Heart right ventricle (tissue), 16 donors: ENCODE measurements at regions of chr11 and their contacts with region 1.

Region 1: DNA sequence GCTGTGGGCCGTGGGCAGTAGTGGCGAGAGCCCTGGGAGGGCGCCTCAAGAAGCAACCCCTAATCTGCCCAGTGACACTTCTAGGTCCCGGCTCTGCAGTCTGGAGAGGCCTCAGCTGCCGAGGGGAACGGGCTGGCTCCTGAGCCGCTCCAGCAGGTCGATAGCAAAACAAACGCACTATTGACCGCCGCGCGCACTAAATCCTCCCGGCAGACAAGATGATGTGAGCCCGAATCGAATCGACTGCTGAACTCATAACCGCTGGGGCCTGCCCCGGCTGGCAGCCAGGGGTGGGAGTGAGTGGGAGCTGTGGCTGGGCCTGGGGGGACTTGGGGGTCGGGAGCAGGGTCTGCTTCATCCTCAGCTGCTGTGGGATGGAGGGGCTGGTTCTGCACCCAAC is 36.1 kb downstream of the FLRT1 start:
- DNase-seq: no peak
- ATAC-seq: no peak
- H3K4me3 ChIP-seq: no peak overlapping the region
- H3K27ac ChIP-seq: no peak overlapping the region
- H3K4me1 ChIP-seq: peaks cover 6 to 47% (median 20%) of the 10 kb centered on the region in 9 donors
- H3K27me3 ChIP-seq: no peaks in the 10 kb centered on the region
- CTCF ChIP-seq: no peak

Region 2: DNA sequence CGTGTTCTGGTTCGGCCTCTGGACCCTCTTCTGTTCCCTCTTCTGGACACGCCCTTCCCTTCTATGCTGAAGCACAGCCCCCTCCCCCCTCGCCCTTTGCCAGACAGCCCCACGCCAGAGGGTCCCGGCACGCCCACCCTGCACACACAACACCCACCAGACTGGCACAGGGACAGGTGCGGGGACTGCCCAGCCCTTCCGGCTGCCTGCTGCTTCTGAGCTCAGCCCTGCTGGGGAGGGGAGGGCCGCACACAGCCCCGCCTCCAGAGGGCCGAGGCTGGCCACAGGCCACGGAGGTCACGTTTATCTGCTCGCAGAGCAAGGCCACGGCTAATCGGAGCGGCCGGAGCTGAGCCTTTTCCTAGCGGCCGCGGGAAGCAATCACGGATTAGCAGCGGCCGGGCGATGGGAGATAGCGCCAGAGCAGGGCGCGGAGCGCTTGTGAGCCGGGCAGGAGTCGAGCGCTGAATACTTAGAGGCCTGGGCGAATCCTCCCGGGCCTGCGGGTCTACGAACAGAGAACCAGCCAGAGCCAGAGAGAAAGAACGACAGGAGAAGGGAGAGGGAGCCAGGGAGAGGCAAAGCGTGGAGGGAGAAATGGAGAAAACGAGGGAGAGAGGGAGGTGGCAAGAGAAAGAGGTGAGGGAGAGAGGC is 64.1 kb before region 1 on chr11:
- intact Hi-C with region 1: loop called in 1 of 10 experiments (anchors 2 kb)
- DNase-seq: peak; percentile 72 to 84
- ATAC-seq: peak; percentile 73 to 91 (median 88)
- H3K4me3 ChIP-seq: peak overlapping the region in 9 of 10 donors; percentile 28 to 54 (median 45)
- H3K27ac ChIP-seq: peak overlapping the region in 9 of 10 donors; percentile 2 to 57 (median 33)
- H3K4me1 ChIP-seq: peaks cover 0 to 31% (median 17%) of the 10 kb centered on the region in 9 donors
- H3K27me3 ChIP-seq: peaks cover 0 to 53% (median 0%) of the 10 kb centered on the region in 7 donors
- CTCF ChIP-seq: peak in 7 of 9 donors; percentile 11 to 50 (median 40)

Region 3: DNA sequence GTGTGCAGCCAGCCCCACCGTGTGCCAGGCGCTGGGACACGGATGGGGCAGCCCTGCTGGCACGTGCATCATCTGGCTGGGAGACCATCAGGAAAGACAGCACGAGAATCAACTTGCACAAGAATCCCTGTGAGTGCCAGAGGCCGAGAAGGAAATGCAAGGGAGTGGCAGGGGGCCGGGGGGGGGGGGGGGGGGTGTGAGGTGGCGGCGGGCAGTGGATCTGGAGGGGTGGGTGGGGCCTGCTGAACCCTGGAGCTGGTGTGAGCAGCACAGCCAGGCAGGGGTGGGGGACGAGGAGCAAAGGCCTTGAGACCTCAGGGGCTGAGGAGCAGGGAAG is 50.1 kb before region 1 on chr11:
- intact Hi-C with region 1: no loop called
- DNase-seq: no peak
- ATAC-seq: peak in 4 of 8 donors; percentile 32 to 58 (median 46)
- H3K4me3 ChIP-seq: no peak overlapping the region
- H3K27ac ChIP-seq: peak overlapping the region in 1 of 10 donors; percentile 39
- H3K4me1 ChIP-seq: peaks cover 0 to 49% (median 26%) of the 10 kb centered on the region in 9 donors
- H3K27me3 ChIP-seq: no peaks in the 10 kb centered on the region
- CTCF ChIP-seq: peak in 2 of 9 donors; percentile 15 to 23

Region 4: GRCh38 chr11:64110465-64111375 is 38.9 kb after region 1 on chr11:
- intact Hi-C with region 1: no loop called
- DNase-seq: no peak
- ATAC-seq: peak in 2 of 8 donors; percentile 6 to 12
- H3K4me3 ChIP-seq: no peak overlapping the region
- H3K27ac ChIP-seq: no peak overlapping the region
- H3K4me1 ChIP-seq: peaks cover 0 to 6% (median 0%) of the 10 kb centered on the region in 9 donors
- H3K27me3 ChIP-seq: no peaks in the 10 kb centered on the region
- CTCF ChIP-seq: no peak

Region 5: GRCh38 chr11:64122411-64123410 is 50.9 kb after region 1 on chr11:
- intact Hi-C with region 1: no loop called
- DNase-seq: peak; percentile 59 to 70
- ATAC-seq: peak in 7 of 8 donors; percentile 68 to 87 (median 76)
- H3K4me3 ChIP-seq: no peak overlapping the region
- H3K27ac ChIP-seq: no peak overlapping the region
- H3K4me1 ChIP-seq: peaks cover 0 to 28% (median 12%) of the 10 kb centered on the region in 9 donors
- H3K27me3 ChIP-seq: no peaks in the 10 kb centered on the region
- CTCF ChIP-seq: no peak

Region 6: DNA sequence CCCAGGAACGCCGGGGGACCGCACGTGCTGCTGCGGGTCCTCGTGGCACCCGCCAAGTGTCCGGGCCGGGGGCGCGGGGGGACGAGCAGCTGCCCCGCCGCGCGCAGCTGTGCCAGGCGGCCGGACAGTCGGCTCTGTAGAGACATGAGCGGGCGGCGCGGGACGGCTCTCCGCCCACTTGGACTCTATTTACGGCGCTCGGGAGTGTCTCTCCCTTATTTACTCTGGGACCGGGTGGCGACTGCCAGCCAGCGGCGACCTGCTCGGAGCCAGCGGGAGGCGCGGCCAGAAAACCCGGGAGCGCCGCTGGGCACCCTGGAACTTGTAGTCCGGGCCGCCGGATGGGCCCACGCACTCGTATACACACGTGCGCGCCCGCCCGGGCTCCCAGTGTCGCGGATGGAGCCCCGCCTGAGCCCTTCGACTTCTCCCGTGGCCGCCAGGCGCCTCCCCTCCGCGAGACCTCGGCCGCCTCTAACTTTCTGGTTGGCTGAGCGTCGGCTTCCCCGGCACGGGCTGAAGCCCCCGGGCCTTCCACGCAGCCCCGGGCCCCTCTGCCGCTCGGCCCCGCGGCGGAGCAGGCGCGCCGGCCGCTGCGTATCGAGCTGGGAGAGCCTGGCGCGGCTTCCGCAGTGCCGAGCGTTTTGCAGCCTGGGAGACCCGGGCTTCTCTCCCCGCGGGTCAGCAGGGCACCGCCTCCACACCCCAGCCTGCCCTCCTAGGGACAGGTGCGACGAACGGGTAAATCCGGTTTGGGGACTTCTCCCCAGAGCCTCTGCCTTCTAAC is 94.2 kb after region 1 on chr11 and contains the start of gene MACROD1:
- intact Hi-C with region 1: no loop called
- DNase-seq: peak; percentile 81 to 88
- ATAC-seq: peak; percentile 83 to 93 (median 87)
- H3K4me3 ChIP-seq: peak within 1 kb of the TSS; percentile 69 to 97 (median 82)
- H3K27ac ChIP-seq: peak within 1 kb of the TSS; percentile 66 to 91 (median 85)
- H3K4me1 ChIP-seq: peaks cover 3 to 24% (median 22%) of the 10 kb centered on the region in 9 donors
- H3K27me3 ChIP-seq: no peaks in the 10 kb centered on the region
- CTCF ChIP-seq: no peak
- total RNA-seq, gene MACROD1: 86.2 to 134 (median 115) TPM